ENCODE measurements at regions of chr7 and their contacts with region 1.

Region 1: GRCh38 chr7:12647364-12648219 is 39.8 kb upstream of the ARL4A start:
- DNase-seq: no peak
- ATAC-seq: no peak
- H3K4me3 ChIP-seq: no peak overlapping the region
- H3K27ac ChIP-seq: no peak overlapping the region
- H3K4me1 ChIP-seq: no peaks in the 10 kb centered on the region
- H3K27me3 ChIP-seq: no peaks in the 10 kb centered on the region
- CTCF ChIP-seq: no peak
- EP300 ChIP-seq: no peak
- POLR2A ChIP-seq: no peak
- RAD21 ChIP-seq: no peak

Region 2: GRCh38 chr7:12423355-12423994 is 224.1 kb before region 1 on chr7:
- CTCF ChIA-PET with region 1: no interaction called
- POLR2A ChIA-PET with region 1: no interaction called
- RAD21 ChIA-PET with region 1: no interaction called
- SMC1A ChIA-PET with region 1: no interaction called
- in situ Hi-C with region 1: no loop called
- intact Hi-C with region 1: no loop called
- DNase-seq: no peak
- ATAC-seq: no peak
- H3K4me3 ChIP-seq: no peak overlapping the region
- H3K27ac ChIP-seq: no peak overlapping the region
- H3K4me1 ChIP-seq: no peaks in the 10 kb centered on the region
- H3K27me3 ChIP-seq: no peaks in the 10 kb centered on the region
- CTCF ChIP-seq: no peak
- EP300 ChIP-seq: no peak
- POLR2A ChIP-seq: no peak
- RAD21 ChIP-seq: no peak

Region 3: DNA sequence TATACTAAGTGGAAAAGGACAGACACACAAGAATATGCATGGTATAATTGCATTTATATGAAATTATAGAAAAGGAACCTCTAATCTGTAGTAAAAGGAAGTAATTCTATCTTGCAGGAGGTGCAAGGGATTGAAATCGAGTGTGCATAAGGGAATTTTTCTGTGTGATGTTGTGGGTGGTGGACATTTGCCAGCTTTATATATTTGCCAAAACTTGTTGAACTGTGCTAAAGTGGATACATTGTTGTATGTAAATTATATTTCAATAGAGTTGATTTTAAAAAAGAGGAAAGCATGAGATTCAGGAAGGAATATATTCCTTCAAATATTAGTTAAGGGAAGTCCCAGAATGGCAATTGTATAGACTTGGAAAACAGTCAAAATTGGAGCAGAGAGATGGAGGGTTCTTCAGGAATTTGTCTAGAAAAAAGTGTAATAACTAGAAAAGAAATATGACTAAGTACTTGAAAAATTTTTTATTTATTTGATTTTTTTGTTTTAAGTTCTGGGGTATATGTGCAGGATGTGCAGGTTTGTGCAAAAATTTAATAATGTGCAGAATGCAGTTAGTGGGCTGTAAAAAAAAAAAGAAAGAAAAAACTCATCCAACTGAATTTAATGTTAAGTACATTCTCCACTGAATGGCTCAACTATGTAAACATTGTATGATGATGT is 136.0 kb after region 1 on chr7:
- CTCF ChIA-PET with region 1: no interaction called
- POLR2A ChIA-PET with region 1: no interaction called
- RAD21 ChIA-PET with region 1: no interaction called
- SMC1A ChIA-PET with region 1: no interaction called
- in situ Hi-C with region 1: no loop called
- intact Hi-C with region 1: no loop called
- DNase-seq: no peak
- ATAC-seq: no peak
- H3K4me3 ChIP-seq: no peak overlapping the region
- H3K27ac ChIP-seq: no peak overlapping the region
- H3K4me1 ChIP-seq: no peaks in the 10 kb centered on the region
- H3K27me3 ChIP-seq: no peaks in the 10 kb centered on the region
- CTCF ChIP-seq: no peak
- EP300 ChIP-seq: no peak
- POLR2A ChIP-seq: no peak
- RAD21 ChIP-seq: no peak

Region 4: DNA sequence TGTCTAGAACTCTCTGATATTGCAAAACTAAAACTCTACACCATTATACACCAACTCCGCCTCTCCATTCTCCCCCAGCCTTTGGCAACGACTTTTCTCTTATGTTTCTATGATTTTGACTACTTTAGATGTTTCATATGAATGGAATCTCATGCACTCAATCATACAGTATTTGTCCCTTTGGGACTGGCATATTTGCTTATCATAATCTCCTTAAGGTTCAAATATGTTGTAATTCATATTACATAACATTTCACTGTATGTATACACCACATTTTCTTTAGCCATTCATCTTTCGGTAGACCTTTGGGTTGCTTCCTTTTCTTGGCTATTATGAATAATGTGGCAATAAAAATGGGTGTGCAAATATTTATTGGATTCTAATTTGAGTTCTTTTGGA is 204.2 kb after region 1 on chr7:
- CTCF ChIA-PET with region 1: no interaction called
- POLR2A ChIA-PET with region 1: no interaction called
- RAD21 ChIA-PET with region 1: no interaction called
- SMC1A ChIA-PET with region 1: no interaction called
- in situ Hi-C with region 1: no loop called
- intact Hi-C with region 1: no loop called
- DNase-seq: no peak
- ATAC-seq: no peak
- H3K4me3 ChIP-seq: no peak overlapping the region
- H3K27ac ChIP-seq: no peak overlapping the region
- H3K4me1 ChIP-seq: no peaks in the 10 kb centered on the region
- H3K27me3 ChIP-seq: no peaks in the 10 kb centered on the region; a peak in 1 of 4 replicates
- CTCF ChIP-seq: no peak
- EP300 ChIP-seq: no peak
- POLR2A ChIP-seq: no peak
- RAD21 ChIP-seq: no peak

Region 5: GRCh38 chr7:13179102-13179501 is 531.5 kb after region 1 on chr7:
- CTCF ChIA-PET with region 1: no interaction called
- POLR2A ChIA-PET with region 1: no interaction called
- RAD21 ChIA-PET with region 1: no interaction called
- SMC1A ChIA-PET with region 1: no interaction called
- in situ Hi-C with region 1: no loop called
- intact Hi-C with region 1: loop called (anchors 10 kb)
- DNase-seq: no peak
- ATAC-seq: peak; percentile 32; the same call in 1 of the 3 replicates
- H3K4me3 ChIP-seq: no peak overlapping the region
- H3K27ac ChIP-seq: no peak overlapping the region
- H3K4me1 ChIP-seq: no peaks in the 10 kb centered on the region
- H3K27me3 ChIP-seq: no peaks in the 10 kb centered on the region
- CTCF ChIP-seq: no peak
- EP300 ChIP-seq: no peak
- POLR2A ChIP-seq: no peak
- RAD21 ChIP-seq: 0 out of 2 replicates have a peak, but pooled peaks have one; percentile 7

Region 6: DNA sequence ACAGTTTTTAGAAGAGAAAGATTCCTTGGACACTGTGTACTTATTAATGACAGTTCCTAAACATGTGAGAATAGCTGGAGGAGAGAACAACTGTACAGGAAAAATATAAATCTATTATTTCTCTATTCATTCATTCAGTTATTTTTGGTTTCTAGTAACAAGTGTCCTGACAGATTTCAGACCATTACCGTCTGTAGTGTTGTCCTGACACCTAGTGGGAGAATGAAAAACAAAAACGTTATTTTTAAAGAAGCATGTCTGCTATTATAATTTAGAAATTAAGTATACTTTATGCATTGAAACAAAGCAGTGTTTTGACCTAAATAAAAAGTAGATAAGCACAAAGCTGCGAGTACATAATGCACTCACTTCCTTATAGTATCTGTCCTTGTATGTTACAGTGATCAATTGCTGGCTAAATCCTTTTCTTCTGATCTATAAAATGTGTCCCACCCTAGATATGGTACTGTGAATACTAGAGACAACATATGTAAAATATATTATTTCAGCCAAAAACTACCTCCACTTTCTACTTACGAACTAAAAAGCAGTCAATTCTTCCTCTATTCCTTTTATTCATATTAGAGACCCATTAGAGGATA is 615.4 kb after region 1 on chr7:
- CTCF ChIA-PET with region 1: no interaction called
- POLR2A ChIA-PET with region 1: no interaction called
- RAD21 ChIA-PET with region 1: no interaction called
- SMC1A ChIA-PET with region 1: no interaction called
- in situ Hi-C with region 1: loop called (anchors 10 kb)
- intact Hi-C with region 1: no loop called
- DNase-seq: no peak
- ATAC-seq: no peak
- H3K4me3 ChIP-seq: no peak overlapping the region
- H3K27ac ChIP-seq: no peak overlapping the region
- H3K4me1 ChIP-seq: no peaks in the 10 kb centered on the region
- H3K27me3 ChIP-seq: no peaks in the 10 kb centered on the region
- CTCF ChIP-seq: peak in 2 of 3 experiments; percentile 13 to 54; a peak in 3 of 6 replicates
- EP300 ChIP-seq: no peak
- POLR2A ChIP-seq: no peak
- RAD21 ChIP-seq: peak; percentile 71

Measured in GM12878 (cell line).